Endothelial cell of umbilical vein (primary cell): ENCODE measurements at regions of chr6 and their contacts with region 1.

Region 1: DNA sequence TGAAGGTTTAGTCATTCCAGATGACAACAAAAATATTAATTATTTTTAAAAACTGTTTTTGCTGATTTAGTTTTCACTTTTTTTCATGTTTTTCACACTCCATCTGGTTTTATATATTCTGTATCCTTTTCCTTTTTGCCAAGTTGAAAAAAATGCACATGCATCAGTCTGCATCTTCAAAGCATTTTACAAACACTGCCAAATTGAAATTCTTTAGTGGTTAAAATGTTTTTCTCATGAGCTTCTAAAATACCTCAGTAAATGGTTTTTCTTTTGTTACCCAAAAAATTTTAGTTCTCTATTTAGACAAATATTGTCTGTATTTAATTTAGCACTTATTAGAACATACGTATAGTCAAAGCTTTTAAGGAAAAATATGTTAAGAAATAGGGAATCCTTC is 386.9 kb upstream of the HSF2 start:
- DNase-seq: no peak
- H3K4me3 ChIP-seq: no peak overlapping the region
- H3K27ac ChIP-seq: no peak overlapping the region
- H3K4me1 ChIP-seq: no peaks in the 10 kb centered on the region
- H3K27me3 ChIP-seq: no peaks in the 10 kb centered on the region
- CTCF ChIP-seq: no peak
- POLR2A ChIP-seq: no peak

Region 2: DNA sequence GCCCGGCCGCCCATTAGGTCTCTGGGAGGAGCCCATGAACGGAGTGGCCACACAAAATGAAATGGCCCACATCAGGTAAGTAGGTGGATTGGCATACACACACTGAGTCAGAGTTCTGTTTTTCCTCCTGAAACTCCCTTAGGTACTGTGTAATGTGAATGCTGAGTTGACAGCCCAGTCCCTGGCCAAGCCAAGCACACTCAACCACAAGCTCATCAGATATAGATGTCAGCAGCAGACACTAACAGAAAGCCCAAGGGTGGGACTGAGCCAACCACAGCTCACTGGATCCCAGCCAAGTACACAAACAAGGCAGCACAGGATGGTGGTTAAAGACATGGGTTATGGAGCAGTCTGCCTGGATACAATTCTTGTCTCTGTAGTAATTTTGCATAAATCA is 173.7 kb before region 1 on chr6:
- CTCF ChIA-PET with region 1: no interaction called
- POLR2A ChIA-PET with region 1: no interaction called
- dilution Hi-C with region 1: no loop called
- intact Hi-C with region 1: no loop called
- DNase-seq: no peak
- H3K4me3 ChIP-seq: no peak overlapping the region
- H3K27ac ChIP-seq: no peak overlapping the region
- H3K4me1 ChIP-seq: peaks cover 3% of the 10 kb centered on the region
- H3K27me3 ChIP-seq: no peaks in the 10 kb centered on the region
- CTCF ChIP-seq: no peak
- POLR2A ChIP-seq: no peak

Region 3: GRCh38 chr6:122026582-122027369 is 14.2 kb after region 1 on chr6:
- CTCF ChIA-PET with region 1: no interaction called
- POLR2A ChIA-PET with region 1: no interaction called
- dilution Hi-C with region 1: no loop called
- intact Hi-C with region 1: loop called (anchors 2 kb)
- DNase-seq: no peak
- H3K4me3 ChIP-seq: no peak overlapping the region
- H3K27ac ChIP-seq: no peak overlapping the region
- H3K4me1 ChIP-seq: no peaks in the 10 kb centered on the region
- H3K27me3 ChIP-seq: no peaks in the 10 kb centered on the region
- CTCF ChIP-seq: no peak
- POLR2A ChIP-seq: no peak